ENCODE measurements at regions of chr6 and their contacts with region 1.

Region 1: GRCh38 chr6:24283043-24283985 is 74.5 kb downstream of the DCDC2 start:
- DNase-seq: peak; percentile 40 to 72 (median 56)
- ATAC-seq: peak; percentile 98
- H3K4me3 ChIP-seq: no peak overlapping the region
- H3K27ac ChIP-seq: no peak overlapping the region
- H3K4me1 ChIP-seq: no peaks in the 10 kb centered on the region
- H3K27me3 ChIP-seq: no peaks in the 10 kb centered on the region
- CTCF ChIP-seq: peak; percentile 68 to 74 (median 72)
- EP300 ChIP-seq: no peak
- POLR2A ChIP-seq: no peak
- RAD21 ChIP-seq: peak; percentile 69 to 75

Region 2: GRCh38 chr6:24307881-24308280 is 24.6 kb after region 1 on chr6:
- CTCF ChIA-PET with region 1: no interaction called
- POLR2A ChIA-PET with region 1: no interaction called
- in situ Hi-C with region 1: no loop called
- intact Hi-C with region 1: no loop called
- DNase-seq: no peak
- ATAC-seq: no peak
- H3K4me3 ChIP-seq: no peak overlapping the region
- H3K27ac ChIP-seq: no peak overlapping the region
- H3K4me1 ChIP-seq: no peaks in the 10 kb centered on the region
- H3K27me3 ChIP-seq: 0 out of 5 replicates have a peak, but pooled peaks cover 0 to 4% of the 10 kb centered on the region in 2 experiments
- CTCF ChIP-seq: no peak
- EP300 ChIP-seq: no peak
- POLR2A ChIP-seq: no peak
- RAD21 ChIP-seq: no peak

Region 3: DNA sequence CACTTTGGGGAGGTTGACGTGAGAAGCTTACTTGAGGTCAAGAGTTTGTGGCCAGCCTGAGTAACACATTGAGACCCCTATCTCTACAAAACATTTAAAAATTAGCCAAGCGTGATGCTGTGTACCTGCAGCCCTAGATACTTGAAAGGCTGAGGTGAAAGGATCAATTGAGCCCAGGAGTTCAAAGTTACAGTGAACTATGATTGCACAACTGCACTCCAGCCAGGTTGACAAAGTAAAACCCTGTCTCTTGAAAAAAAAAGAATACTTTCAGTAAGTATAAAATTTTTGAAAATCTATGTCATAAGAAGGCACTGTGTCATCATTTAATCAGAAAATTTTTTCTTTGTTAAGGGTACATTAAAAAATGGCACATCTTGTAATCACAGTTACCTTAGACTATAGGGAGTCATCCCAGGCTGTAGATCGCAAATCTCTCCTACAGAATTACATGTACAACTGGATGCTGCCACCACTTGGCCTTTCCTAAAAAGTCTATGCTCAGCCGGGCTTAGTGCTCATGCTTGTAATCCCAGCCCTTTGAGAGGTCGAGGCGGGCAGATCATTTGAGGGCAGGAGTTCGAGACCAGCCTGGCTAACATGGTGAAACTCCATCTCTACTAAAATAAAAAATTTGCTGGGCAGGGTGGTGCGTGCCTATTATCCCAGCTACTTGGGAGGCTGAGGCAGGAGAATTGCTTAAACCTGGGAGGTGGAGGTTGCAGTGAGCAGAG is 102.4 kb after region 1 on chr6:
- CTCF ChIA-PET with region 1: interaction called, 12 read pairs
- POLR2A ChIA-PET with region 1: interaction called, 5 read pairs
- in situ Hi-C with region 1: loop called (anchors 5 kb)
- intact Hi-C with region 1: loop called (anchors 1 kb)
- DNase-seq: no peak
- ATAC-seq: no peak
- H3K4me3 ChIP-seq: no peak overlapping the region
- H3K27ac ChIP-seq: no peak overlapping the region
- H3K4me1 ChIP-seq: peaks cover 0 to 6% of the 10 kb centered on the region in 2 experiments; a peak in 1 of 5 replicates
- H3K27me3 ChIP-seq: peaks cover 3 to 13% of the 10 kb centered on the region in 2 experiments; a peak in 2 of 5 replicates
- CTCF ChIP-seq: 0 out of 6 replicates have a peak, but pooled peaks of 1 of the 3 experiments have one; percentile 4
- EP300 ChIP-seq: no peak
- POLR2A ChIP-seq: no peak
- RAD21 ChIP-seq: peak in 1 of 2 experiments; percentile 5; a peak in 1 of 4 replicates

Region 4: DNA sequence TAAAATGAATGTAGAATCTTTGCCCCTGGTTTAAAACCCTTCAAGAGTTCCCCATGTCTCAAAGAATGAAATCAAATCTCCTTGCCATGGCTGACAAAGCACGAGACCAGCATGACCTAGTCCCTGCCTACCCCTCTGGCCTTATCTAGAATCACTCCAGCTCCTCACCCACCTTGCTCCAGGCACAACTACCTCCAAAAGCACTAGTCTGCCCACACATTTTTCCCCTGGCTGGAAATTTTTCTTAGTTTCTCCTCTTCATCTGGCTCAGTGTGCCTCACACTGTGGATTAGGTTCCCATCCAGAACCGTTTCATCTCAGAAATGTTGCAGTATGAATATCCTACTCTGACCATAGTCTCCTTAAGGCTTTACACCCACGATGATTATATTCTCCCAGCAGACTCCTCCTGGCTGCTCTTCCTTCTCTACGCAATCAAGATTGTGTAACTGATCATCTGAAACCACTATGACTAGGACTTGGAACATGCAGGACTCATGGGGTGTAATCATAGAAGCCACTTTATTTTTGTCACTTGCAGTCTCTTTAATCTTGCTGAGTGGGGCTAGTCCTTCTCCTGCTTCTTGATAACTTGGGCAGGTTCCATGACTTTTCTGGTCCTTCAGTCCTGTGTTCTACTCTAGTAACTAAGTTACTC is 111.6 kb after region 1 on chr6:
- CTCF ChIA-PET with region 1: interaction called, 12 read pairs
- POLR2A ChIA-PET with region 1: no interaction called
- in situ Hi-C with region 1: no loop called
- intact Hi-C with region 1: no loop called
- DNase-seq: no peak
- ATAC-seq: no peak
- H3K4me3 ChIP-seq: no peak overlapping the region
- H3K27ac ChIP-seq: no peak overlapping the region
- H3K4me1 ChIP-seq: peaks cover 0 to 9% of the 10 kb centered on the region in 2 experiments; a peak in 3 of 5 replicates
- H3K27me3 ChIP-seq: no peaks in the 10 kb centered on the region
- CTCF ChIP-seq: no peak
- EP300 ChIP-seq: no peak
- POLR2A ChIP-seq: no peak
- RAD21 ChIP-seq: no peak

Region 5: GRCh38 chr6:24520929-24521546 is 237.7 kb after region 1 on chr6:
- CTCF ChIA-PET with region 1: no interaction called
- POLR2A ChIA-PET with region 1: no interaction called
- in situ Hi-C with region 1: no loop called
- intact Hi-C with region 1: loop called (anchors 2 kb)
- DNase-seq: peak in 3 of 4 experiments; percentile 30 to 71 (median 69)
- ATAC-seq: peak; percentile 97
- H3K4me3 ChIP-seq: no peak overlapping the region
- H3K27ac ChIP-seq: no peak overlapping the region
- H3K4me1 ChIP-seq: peaks cover 4 to 8% of the 10 kb centered on the region in 2 experiments; a peak in 4 of 5 replicates
- H3K27me3 ChIP-seq: no peaks in the 10 kb centered on the region
- CTCF ChIP-seq: peak; percentile 80 to 90 (median 81)
- EP300 ChIP-seq: no peak
- POLR2A ChIP-seq: no peak
- RAD21 ChIP-seq: peak; percentile 23 to 65; a peak in 3 of 4 replicates

Region 6: GRCh38 chr6:24689964-24690363 is 406.6 kb after region 1 on chr6:
- CTCF ChIA-PET with region 1: interaction called, 8 read pairs
- POLR2A ChIA-PET with region 1: no interaction called
- in situ Hi-C with region 1: no loop called
- intact Hi-C with region 1: loop called (anchors 2 kb)
- DNase-seq: no peak
- ATAC-seq: no peak
- H3K4me3 ChIP-seq: no peak overlapping the region
- H3K27ac ChIP-seq: no peak overlapping the region
- H3K4me1 ChIP-seq: no peaks in the 10 kb centered on the region
- H3K27me3 ChIP-seq: no peaks in the 10 kb centered on the region
- CTCF ChIP-seq: no peak
- EP300 ChIP-seq: no peak
- POLR2A ChIP-seq: no peak
- RAD21 ChIP-seq: no peak

Region 7: DNA sequence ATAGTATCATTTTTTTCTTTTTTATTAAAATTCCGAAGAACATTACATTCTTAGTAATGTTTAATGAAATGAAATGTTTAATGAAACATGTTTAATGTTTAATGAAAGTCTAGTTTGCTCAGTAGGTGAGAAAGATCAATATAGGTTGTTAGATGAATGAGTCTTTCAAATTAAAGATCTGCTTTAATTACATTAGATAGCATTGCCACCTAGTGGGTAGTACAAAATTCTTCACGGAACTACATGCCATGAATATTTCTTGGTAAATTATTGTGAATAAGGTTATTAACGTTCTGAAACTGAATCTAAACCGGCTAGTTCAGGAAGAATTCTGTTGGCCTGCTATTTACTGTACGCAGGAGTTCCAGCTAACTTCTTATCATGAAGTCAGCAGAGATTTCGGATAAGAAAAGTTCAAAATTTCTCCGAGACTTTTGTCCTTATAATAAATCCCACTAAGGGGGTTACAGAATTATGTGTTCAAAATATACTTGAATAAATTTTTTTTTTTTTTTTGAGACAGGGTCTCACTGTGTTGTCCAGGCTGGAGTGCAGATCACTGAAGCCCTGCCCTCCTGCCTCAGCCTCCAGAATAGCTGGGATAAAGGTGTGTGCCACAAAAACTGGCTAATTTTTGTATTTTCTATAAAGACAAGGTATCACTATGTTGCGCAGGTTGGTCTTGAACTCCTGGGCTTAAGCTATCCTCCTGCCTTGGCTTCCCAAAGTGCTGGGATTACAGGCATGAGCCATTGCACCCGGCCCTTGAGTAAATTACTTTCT is 483.6 kb after region 1 on chr6:
- CTCF ChIA-PET with region 1: interaction called, 5 read pairs
- POLR2A ChIA-PET with region 1: no interaction called
- in situ Hi-C with region 1: no loop called
- intact Hi-C with region 1: loop called (anchors 5 kb)
- DNase-seq: no peak
- ATAC-seq: peak; percentile 59
- H3K4me3 ChIP-seq: no peak overlapping the region
- H3K27ac ChIP-seq: no peak overlapping the region
- H3K4me1 ChIP-seq: no peaks in the 10 kb centered on the region; a peak in 1 of 5 replicates
- H3K27me3 ChIP-seq: no peaks in the 10 kb centered on the region
- CTCF ChIP-seq: peak in 2 of 3 experiments; percentile 11 to 76; a peak in 2 of 6 replicates
- EP300 ChIP-seq: no peak
- POLR2A ChIP-seq: no peak
- RAD21 ChIP-seq: peak; percentile 77 to 78

Region 8: DNA sequence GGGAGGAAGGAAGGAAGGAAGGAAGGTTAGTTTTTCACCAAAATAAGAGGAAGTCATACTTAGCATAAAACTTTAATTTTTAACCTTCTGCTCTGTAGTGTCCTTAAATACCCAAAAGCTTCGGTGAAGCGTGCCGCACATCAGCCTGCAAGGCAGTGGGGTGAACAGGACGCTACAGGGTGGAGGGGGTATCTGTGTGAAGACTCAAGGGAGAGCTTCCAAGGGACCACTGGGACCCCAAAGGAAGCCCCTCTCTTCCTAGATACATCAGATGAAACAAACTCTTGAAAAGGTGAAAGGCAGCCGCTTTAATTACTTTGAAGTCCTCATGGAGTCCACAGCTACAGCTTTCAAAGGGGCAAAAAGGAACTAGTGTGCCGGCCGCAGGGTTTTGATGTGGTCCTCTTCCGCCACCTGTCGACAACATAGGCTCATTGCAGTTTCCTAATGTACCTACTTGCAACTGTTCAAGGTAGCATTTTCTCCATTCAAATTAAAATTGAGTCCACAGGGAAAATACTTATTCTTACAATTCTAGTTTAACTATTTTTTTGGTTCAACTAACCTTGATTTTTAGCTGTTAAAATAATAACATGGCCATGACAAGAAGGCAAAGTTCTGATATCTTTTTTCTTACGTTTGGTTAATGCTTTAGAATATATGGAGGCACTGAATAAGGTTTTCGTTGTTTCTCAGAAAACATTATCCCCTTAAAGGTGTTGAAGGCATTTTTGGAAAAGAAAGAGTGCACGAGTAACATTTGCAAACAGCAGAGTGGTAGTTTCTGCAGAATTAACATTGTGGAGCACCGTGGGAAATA is 787.4 kb after region 1 on chr6:
- CTCF ChIA-PET with region 1: interaction called, 4 read pairs
- POLR2A ChIA-PET with region 1: no interaction called
- in situ Hi-C with region 1: no loop called
- intact Hi-C with region 1: loop called (anchors 10 kb)
- DNase-seq: peak; percentile 71 to 81 (median 72)
- ATAC-seq: peak; percentile 94
- H3K4me3 ChIP-seq: no peak overlapping the region
- H3K27ac ChIP-seq: no peak overlapping the region
- H3K4me1 ChIP-seq: no peaks in the 10 kb centered on the region
- H3K27me3 ChIP-seq: peaks cover 2 to 12% of the 10 kb centered on the region in 2 experiments; a peak in 3 of 5 replicates
- CTCF ChIP-seq: peak; percentile 77 to 96 (median 87)
- EP300 ChIP-seq: no peak
- POLR2A ChIP-seq: no peak
- RAD21 ChIP-seq: peak; percentile 96 to 97